Heart right ventricle (tissue), 16 donors: ENCODE measurements at regions of chr20 and their contacts with region 1.

Region 1: GRCh38 chr20:33489495-33490022 is 337 bp upstream of the CBFA2T2 start:
- DNase-seq: peak; percentile 99 to 100
- ATAC-seq: peak; percentile 98 to 100 (median 99)
- H3K4me3 ChIP-seq: peak overlapping the region in 9 of 10 donors; percentile 27 to 99 (median 91)
- H3K27ac ChIP-seq: peak overlapping the region; percentile 44 to 98 (median 88)
- H3K4me1 ChIP-seq: peaks cover 3 to 24% (median 22%) of the 10 kb centered on the region in 9 donors
- H3K27me3 ChIP-seq: no peaks in the 10 kb centered on the region
- CTCF ChIP-seq: no peak

Region 2: GRCh38 chr20:33415948-33416347 is 73.6 kb before region 1 on chr20:
- intact Hi-C with region 1: loop called in 1 of 10 experiments (anchors 2 kb)
- DNase-seq: peak in 1 of 2 donors; percentile 58
- ATAC-seq: peak in 7 of 8 donors; percentile 18 to 54 (median 40)
- H3K4me3 ChIP-seq: no peak overlapping the region
- H3K27ac ChIP-seq: peak overlapping the region in 4 of 10 donors; percentile 24 to 53 (median 34)
- H3K4me1 ChIP-seq: peaks cover 11 to 57% (median 35%) of the 10 kb centered on the region in 9 donors
- H3K27me3 ChIP-seq: no peaks in the 10 kb centered on the region
- CTCF ChIP-seq: peak; percentile 20 to 65 (median 48)

Region 3: DNA sequence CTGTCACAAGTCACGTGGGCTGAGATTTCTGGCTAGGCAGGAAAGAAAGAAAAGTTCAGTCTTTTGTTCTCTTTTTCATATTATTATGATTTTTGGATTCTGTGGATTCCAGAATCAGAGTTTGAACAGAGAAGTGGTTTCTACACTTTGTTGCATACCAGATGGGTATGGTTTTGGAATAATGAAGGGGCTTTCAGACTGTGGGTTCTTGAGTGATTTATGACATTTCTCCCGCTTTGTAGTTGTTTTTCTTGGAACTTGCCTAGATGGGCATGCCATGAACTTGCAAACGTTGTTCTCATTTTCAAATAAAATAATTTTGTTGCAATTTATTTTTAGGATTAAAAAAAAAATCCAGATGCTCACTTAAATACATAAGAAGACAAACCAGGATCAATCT is 34.7 kb after region 1 on chr20:
- intact Hi-C with region 1: no loop called
- DNase-seq: no peak
- ATAC-seq: no peak
- H3K4me3 ChIP-seq: no peak overlapping the region
- H3K27ac ChIP-seq: no peak overlapping the region
- H3K4me1 ChIP-seq: peaks cover 0 to 13% (median 0%) of the 10 kb centered on the region in 9 donors
- H3K27me3 ChIP-seq: no peaks in the 10 kb centered on the region
- CTCF ChIP-seq: no peak

Region 4: DNA sequence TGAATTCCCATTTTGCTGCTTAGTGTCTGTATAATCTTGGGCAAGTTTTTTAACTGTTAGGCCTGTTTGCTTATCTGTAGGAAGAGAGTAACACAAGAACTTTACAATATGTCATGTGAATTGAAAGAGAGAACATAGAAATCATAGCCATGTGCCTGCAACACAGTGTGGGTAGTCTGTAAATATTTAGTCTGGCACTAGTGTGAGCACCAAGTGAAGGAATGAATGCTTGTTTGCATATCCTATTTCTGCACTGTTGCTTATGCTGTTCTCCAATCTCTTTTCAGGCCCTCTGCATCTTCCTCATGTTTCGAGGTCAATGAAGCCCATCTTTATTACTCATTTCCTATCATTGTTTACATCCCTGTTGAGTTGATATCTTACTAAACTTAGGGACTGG is 49.6 kb after region 1 on chr20:
- intact Hi-C with region 1: no loop called
- DNase-seq: no peak
- ATAC-seq: no peak
- H3K4me3 ChIP-seq: no peak overlapping the region
- H3K27ac ChIP-seq: peak overlapping the region in 1 of 10 donors; percentile 33
- H3K4me1 ChIP-seq: peaks cover 0 to 25% (median 10%) of the 10 kb centered on the region in 9 donors
- H3K27me3 ChIP-seq: no peaks in the 10 kb centered on the region
- CTCF ChIP-seq: no peak